ENCODE measurements at regions of chr11 and their contacts with region 1.

Region 1: DNA sequence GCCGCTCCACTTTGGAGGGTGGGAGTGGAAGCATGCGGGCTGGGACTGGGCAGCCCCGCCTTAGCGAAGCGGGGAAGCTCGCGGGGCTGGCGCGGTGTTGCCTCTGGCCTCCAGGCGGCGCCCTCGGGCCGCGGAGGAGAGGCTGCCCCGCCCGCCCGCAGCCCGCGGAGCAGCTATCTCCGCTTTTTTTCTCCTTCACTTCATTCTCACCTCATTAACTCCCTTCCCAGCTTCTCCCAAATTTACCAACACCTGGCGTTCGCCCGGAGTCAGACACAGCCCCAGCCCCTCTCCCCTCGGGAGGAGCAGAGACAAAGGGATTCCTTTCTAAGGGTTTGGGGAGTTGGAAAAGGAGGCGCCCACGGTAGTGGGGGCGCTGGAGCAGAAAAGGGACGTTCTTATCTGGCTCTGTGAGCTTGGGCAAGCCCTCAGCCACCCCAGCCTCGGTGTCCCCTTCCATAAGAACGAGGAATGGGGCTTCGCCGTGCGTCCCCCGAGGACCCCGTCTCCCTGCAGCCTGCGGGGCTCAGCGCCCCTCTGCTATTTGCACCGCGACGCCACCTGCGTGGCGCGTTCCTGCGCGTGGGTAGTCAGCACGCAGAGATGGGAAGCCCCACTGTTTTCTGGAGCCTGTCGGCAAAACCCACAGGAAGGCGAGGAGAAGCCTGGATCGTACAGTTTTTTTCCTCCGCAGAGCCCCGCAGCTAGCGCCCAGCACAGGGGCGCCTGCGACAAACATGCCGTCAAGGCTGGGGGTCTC is 1.5 kb upstream of the WNT11 start:
- DNase-seq: peak; percentile 80
- ATAC-seq: peak; percentile 79
- H3K4me3 Mint-ChIP-seq: peak overlapping the region; percentile 69
- H3K27ac Mint-ChIP-seq: no peak overlapping the region
- H3K4me1 Mint-ChIP-seq: peaks cover 11% of the 10 kb centered on the region
- H3K27me3 Mint-ChIP-seq: peaks cover 55% of the 10 kb centered on the region
- CTCF ChIP-seq: peak; percentile 97

Region 2: DNA sequence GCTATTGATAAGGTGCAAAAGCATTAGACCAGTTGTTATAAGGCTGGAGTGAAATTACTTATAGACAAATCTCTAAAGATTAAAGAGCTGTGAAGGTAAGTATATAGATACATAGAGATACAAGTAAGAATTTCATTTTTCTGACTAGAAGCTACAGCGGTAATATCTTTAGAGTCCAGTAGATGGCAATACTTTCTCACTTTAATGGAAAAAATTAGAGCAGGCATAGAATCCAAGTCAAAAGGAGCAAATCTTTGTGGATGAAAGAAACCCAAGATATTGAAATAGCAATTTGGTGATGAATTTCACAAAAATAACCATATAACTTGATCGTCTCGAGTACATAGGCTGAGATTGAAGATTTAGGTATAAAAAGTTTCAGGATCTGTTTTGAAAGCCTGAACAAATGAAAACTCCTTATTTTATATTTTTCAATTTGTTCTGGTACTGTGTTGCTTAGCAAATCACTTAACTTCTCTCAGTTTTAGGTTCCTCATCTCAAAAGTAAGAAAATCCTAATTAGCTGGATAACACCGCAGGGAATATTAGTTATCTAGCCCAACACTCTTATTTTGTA is 310.9 kb before region 1 on chr11:
- CTCF ChIA-PET with region 1: interaction called, 31 read pairs
- POLR2A ChIA-PET with region 1: no interaction called
- intact Hi-C with region 1: no loop called
- DNase-seq: no peak
- ATAC-seq: peak; percentile 49
- H3K4me3 Mint-ChIP-seq: no peak overlapping the region
- H3K27ac Mint-ChIP-seq: no peak overlapping the region
- H3K4me1 Mint-ChIP-seq: peaks cover 31% of the 10 kb centered on the region
- H3K27me3 Mint-ChIP-seq: no peaks in the 10 kb centered on the region
- CTCF ChIP-seq: peak; percentile 83

Region 3: GRCh38 chr11:76124905-76125770 is 82.7 kb before region 1 on chr11:
- CTCF ChIA-PET with region 1: no interaction called
- POLR2A ChIA-PET with region 1: no interaction called
- intact Hi-C with region 1: no loop called
- DNase-seq: no peak
- ATAC-seq: no peak
- H3K4me3 Mint-ChIP-seq: no peak overlapping the region
- H3K27ac Mint-ChIP-seq: no peak overlapping the region
- H3K4me1 Mint-ChIP-seq: peaks cover 8% of the 10 kb centered on the region
- H3K27me3 Mint-ChIP-seq: no peaks in the 10 kb centered on the region
- CTCF ChIP-seq: no peak

Region 4: GRCh38 chr11:76166314-76166713 is 41.5 kb before region 1 on chr11:
- CTCF ChIA-PET with region 1: no interaction called
- POLR2A ChIA-PET with region 1: no interaction called
- intact Hi-C with region 1: no loop called
- DNase-seq: peak; percentile 50
- ATAC-seq: peak; percentile 88
- H3K4me3 Mint-ChIP-seq: no peak overlapping the region
- H3K27ac Mint-ChIP-seq: no peak overlapping the region
- H3K4me1 Mint-ChIP-seq: peaks cover 1% of the 10 kb centered on the region
- H3K27me3 Mint-ChIP-seq: no peaks in the 10 kb centered on the region
- CTCF ChIP-seq: no peak

Region 5: DNA sequence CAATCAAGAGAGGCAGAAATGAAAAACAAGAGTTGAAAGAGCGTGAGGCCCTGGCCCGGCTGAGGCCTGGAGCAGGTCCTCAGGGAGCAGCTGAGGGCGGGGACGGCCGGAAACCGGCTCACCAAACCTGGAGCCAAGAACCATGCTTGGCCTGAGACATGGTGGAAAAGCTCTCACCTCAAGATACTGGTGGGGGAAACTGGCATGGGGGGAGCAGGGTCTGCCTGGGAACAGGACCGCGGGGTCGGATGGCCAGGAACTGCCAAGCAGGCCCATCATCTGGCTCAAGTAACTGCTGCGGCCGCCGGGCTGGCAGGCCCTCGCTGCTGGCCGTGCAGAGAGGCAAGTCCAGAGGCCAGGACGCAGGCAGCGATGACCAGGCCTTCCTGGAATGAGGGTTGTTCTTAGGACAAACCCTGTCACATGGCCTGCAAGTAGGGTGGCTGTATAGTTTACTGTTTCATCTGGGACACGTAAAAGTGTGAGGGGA is 17.3 kb after region 1 on chr11:
- CTCF ChIA-PET with region 1: interaction called, 128 read pairs
- POLR2A ChIA-PET with region 1: interaction called, 4 read pairs
- intact Hi-C with region 1: no loop called
- DNase-seq: no peak
- ATAC-seq: no peak
- H3K4me3 Mint-ChIP-seq: no peak overlapping the region
- H3K27ac Mint-ChIP-seq: no peak overlapping the region
- H3K4me1 Mint-ChIP-seq: no peaks in the 10 kb centered on the region
- H3K27me3 Mint-ChIP-seq: no peaks in the 10 kb centered on the region
- CTCF ChIP-seq: no peak

Region 6: DNA sequence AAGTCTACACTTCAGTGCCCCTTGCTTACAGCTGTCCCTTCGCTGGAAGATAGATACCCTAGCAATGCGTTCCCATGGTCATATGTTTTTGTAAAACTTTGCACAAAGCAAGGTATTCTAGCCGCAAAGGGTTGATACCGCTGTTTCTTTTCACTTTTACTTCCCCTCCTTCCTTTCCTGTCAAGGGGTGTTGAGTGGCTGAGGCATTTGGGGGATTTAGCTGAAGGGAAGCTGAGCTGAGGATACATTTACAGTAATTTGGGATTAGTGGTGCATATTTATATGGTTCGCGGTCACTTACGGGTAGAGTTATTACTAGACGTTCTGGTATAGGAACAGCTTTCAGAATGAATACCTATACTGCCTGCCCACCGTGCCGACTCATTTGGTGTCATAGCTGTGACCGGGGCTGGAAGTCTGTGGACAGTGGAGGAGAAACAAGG is 85.4 kb after region 1 on chr11:
- CTCF ChIA-PET with region 1: interaction called, 65 read pairs
- POLR2A ChIA-PET with region 1: no interaction called
- intact Hi-C with region 1: no loop called
- DNase-seq: peak; percentile 60
- ATAC-seq: peak; percentile 73
- H3K4me3 Mint-ChIP-seq: peak overlapping the region; percentile 21
- H3K27ac Mint-ChIP-seq: no peak overlapping the region
- H3K4me1 Mint-ChIP-seq: peaks cover 19% of the 10 kb centered on the region
- H3K27me3 Mint-ChIP-seq: no peaks in the 10 kb centered on the region
- CTCF ChIP-seq: no peak

Region 7: GRCh38 chr11:76329084-76329984 is 121.5 kb after region 1 on chr11:
- CTCF ChIA-PET with region 1: interaction called, 214 read pairs
- POLR2A ChIA-PET with region 1: no interaction called
- intact Hi-C with region 1: no loop called
- DNase-seq: no peak
- ATAC-seq: no peak
- H3K4me3 Mint-ChIP-seq: no peak overlapping the region
- H3K27ac Mint-ChIP-seq: no peak overlapping the region
- H3K4me1 Mint-ChIP-seq: no peaks in the 10 kb centered on the region
- H3K27me3 Mint-ChIP-seq: peaks cover 3% of the 10 kb centered on the region
- CTCF ChIP-seq: no peak

Region 8: GRCh38 chr11:76444384-76445123 is 236.7 kb after region 1 on chr11 and contains the start of gene EMSY:
- CTCF ChIA-PET with region 1: interaction called, 11 read pairs
- POLR2A ChIA-PET with region 1: no interaction called
- intact Hi-C with region 1: no loop called
- DNase-seq: peak; percentile 94
- ATAC-seq: peak; percentile 93
- H3K4me3 Mint-ChIP-seq: peak within 1 kb of the TSS; percentile 84
- H3K27ac Mint-ChIP-seq: peak within 1 kb of the TSS; percentile 91
- H3K4me1 Mint-ChIP-seq: peaks cover 26% of the 10 kb centered on the region
- H3K27me3 Mint-ChIP-seq: no peaks in the 10 kb centered on the region
- CTCF ChIP-seq: no peak
- total RNA-seq, gene EMSY: 29.0 to 31.4 TPM